Mammary epithelial cell (primary cell): ENCODE measurements at regions of chr7 and their contacts with region 1.

Region 1: DNA sequence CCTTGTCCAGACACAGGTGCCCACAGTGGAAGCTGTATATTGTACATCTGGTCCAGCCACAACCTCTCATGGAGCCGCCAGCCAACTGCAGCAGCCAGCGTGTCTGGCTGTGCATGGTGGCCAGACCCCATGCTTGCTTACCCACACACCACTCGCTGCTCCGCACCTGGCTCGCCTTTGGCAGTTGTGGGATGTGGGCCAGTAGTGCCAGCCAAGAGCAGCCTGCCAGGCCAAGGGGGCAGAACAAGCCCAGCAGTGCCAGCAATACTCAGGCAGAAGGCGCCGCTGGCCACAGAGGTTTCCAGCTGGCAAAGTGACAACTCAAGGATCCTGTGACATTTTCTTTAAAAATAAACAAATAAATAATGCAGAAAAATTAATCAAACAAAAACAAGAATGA is 11.7 kb upstream of the TMEM243 start:
- DNase-seq: no peak
- H3K4me3 ChIP-seq: no peak overlapping the region
- H3K27ac ChIP-seq: no peak overlapping the region
- H3K4me1 ChIP-seq: no peaks in the 10 kb centered on the region
- H3K27me3 ChIP-seq: peaks cover 3% of the 10 kb centered on the region
- CTCF ChIP-seq: no peak

Region 2: DNA sequence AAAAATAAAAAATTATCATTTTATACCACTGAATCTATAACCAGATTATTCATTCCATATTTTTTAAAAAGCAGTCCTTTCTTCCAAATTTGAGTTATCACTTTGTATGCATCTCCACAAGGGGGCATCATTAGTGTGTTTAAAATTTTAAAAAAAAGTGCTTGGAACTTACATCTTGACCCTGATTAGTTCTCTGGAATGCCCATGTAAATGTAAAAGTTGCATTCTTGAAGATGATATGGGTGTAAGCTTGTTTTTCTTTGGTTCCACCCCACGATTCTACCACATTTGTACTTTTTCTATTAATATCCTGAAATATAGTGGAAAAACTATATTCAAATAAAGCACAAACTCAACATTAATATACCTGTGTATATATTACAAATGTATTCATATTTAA is 316.7 kb before region 1 on chr7:
- CTCF ChIA-PET with region 1: no interaction called
- dilution Hi-C with region 1: no loop called
- in situ Hi-C with region 1: no loop called
- intact Hi-C with region 1: loop called (anchors 2 kb)
- DNase-seq: no peak
- H3K4me3 ChIP-seq: no peak overlapping the region
- H3K27ac ChIP-seq: no peak overlapping the region
- H3K4me1 ChIP-seq: no peaks in the 10 kb centered on the region
- H3K27me3 ChIP-seq: peaks cover 2% of the 10 kb centered on the region
- CTCF ChIP-seq: peak; percentile 30 to 51

Region 3: DNA sequence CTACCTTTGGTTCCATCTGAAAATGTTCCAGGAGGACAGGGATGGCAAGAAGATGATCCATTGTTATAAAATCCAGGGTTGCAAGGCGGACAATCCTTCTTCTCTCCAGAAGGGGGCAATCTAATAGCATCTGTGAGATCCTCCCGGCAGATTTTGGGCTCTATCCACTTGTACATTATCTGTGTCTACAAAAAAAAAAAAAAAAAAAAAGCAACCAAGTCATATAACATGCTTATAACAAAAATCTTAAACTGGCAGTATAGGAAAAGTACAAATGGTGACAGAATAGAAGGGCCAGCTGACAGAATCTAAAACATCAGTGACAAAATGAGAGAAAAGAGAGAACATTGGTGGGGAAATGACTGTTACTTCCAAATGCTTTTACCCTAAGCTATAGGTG is 304.5 kb before region 1 on chr7:
- CTCF ChIA-PET with region 1: no interaction called
- dilution Hi-C with region 1: no loop called
- in situ Hi-C with region 1: loop called in 1 of 2 experiments (anchors 10 kb)
- intact Hi-C with region 1: loop called (anchors 2 kb)
- DNase-seq: peak; percentile 24
- H3K4me3 ChIP-seq: no peak overlapping the region
- H3K27ac ChIP-seq: no peak overlapping the region
- H3K4me1 ChIP-seq: no peaks in the 10 kb centered on the region
- H3K27me3 ChIP-seq: no peaks in the 10 kb centered on the region
- CTCF ChIP-seq: peak; percentile 63 to 78